RWPE1 (cell line): ENCODE measurements at regions of chr12 and their contacts with region 1.

Region 1: GRCh38 chr12:48758221-48758620 is 30.7 kb downstream of the ADCY6 start:
- DNase-seq: no peak
- H3K27ac ChIP-seq: no peak overlapping the region
- CTCF ChIP-seq: no peak

Region 2: DNA sequence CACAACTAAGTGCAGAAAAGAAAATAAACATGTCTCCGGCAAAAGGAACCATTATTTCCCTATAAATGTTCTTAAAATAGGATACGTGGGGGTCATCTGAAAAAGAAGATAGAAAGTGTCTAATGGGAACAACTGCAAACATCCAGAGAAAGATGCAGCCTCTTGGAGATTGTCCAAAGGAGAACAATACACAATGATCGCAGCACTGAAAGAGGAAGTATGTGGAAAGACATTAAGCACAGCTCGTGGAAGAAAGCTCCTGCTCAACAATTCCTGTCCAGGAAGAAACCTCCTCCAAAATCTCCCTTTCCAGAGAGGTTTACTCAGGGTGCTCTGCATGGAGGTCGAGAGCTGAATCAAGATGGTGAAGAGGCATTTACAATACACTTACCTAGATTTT is 185.9 kb before region 1 on chr12:
- CTCF ChIA-PET with region 1: no interaction called
- POLR2A ChIA-PET with region 1: no interaction called
- DNase-seq: no peak
- H3K27ac ChIP-seq: no peak overlapping the region
- CTCF ChIP-seq: no peak

Region 3: GRCh38 chr12:48728807-48729206 is 29.4 kb before region 1 on chr12:
- CTCF ChIA-PET with region 1: interaction called, 11 read pairs
- POLR2A ChIA-PET with region 1: no interaction called
- DNase-seq: no peak
- H3K27ac ChIP-seq: no peak overlapping the region
- CTCF ChIP-seq: no peak

Region 4: GRCh38 chr12:48795480-48796455 is 37.5 kb after region 1 on chr12:
- CTCF ChIA-PET with region 1: interaction called, 68 read pairs
- POLR2A ChIA-PET with region 1: no interaction called
- DNase-seq: peak; percentile 89
- H3K27ac ChIP-seq: peak overlapping the region; percentile 32; the same call in 1 of the 2 replicates
- CTCF ChIP-seq: peak; percentile 91

Region 5: DNA sequence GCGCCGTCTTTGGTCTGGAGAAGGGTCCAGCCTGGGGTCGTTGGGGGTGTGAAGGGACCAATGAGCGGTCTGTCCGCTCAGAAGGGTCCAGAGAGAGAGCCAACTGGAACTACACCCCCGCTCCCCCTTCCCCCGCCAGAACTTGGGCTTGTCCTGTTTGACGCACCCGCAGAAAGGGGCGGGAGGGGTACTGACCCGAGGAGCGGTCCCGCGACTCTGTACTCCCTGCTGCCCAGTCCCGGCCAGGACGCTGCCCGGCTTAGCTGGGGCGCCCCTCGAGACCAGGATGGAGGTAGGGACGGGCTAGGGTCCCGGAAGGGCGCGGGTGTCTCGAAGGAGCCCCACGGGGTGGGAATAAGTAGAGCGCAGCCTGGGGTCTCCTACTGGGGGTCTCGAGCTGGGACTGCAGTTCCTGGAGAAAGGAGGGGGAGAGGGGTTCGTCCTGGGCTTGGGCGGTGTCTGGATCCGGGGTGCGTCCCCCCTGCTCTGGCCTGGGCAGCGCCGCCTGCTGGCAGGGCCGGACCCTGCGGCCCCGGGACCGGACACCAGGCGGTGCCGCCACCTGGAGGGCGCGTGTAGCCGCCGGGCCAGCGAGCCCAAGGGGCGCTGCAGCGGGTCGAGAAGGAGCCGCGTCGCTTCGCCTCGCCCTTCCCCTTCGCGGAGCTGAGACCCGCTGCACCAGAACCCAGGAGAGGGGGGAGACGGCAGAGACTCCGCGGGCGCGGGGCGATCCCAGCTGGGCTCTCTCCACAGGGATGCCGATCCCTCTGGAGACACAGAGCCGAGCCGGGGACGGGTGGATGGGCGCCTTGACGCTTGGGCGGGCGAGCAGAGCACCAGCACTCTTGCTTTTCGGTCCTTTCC is 56.3 kb after region 1 on chr12:
- CTCF ChIA-PET with region 1: interaction called, 21 read pairs
- POLR2A ChIA-PET with region 1: no interaction called
- DNase-seq: peak; percentile 82
- H3K27ac ChIP-seq: peak overlapping the region; percentile 87
- CTCF ChIP-seq: peak; percentile 98

Region 6: GRCh38 chr12:48865434-48866290 is 107.4 kb after region 1 on chr12 and contains the start of gene RND1:
- CTCF ChIA-PET with region 1: no interaction called
- POLR2A ChIA-PET with region 1: no interaction called
- DNase-seq: peak; percentile 94
- H3K27ac ChIP-seq: peak within 1 kb of the TSS; percentile 39
- CTCF ChIP-seq: no peak

Region 7: GRCh38 chr12:49503674-49504180 is 745.5 kb after region 1 on chr12:
- CTCF ChIA-PET with region 1: no interaction called
- POLR2A ChIA-PET with region 1: no interaction called
- DNase-seq: peak; percentile 85
- H3K27ac ChIP-seq: peak overlapping the region; percentile 94
- CTCF ChIP-seq: no peak